Activated CD4-positive, alpha-beta memory T cell treated with anti-CD3 and anti-CD28 coated beads, Interleukin-2, amount 10 ng/mL, durations not matched to agents 7 days and 5 days (primary cell): ENCODE measurements at regions of chr1 and their contacts with region 1.

Region 1: GRCh38 chr1:225428068-225428880 is 436 bp upstream of the LBR start:
- DNase-seq: peak; percentile 95
- H3K4me3 Mint-ChIP-seq: peak overlapping the region; percentile 89
- H3K27ac Mint-ChIP-seq: peak overlapping the region; percentile 89
- H3K4me1 Mint-ChIP-seq: peaks cover 54% of the 10 kb centered on the region
- H3K27me3 Mint-ChIP-seq: peaks cover 2% of the 10 kb centered on the region

Region 2: GRCh38 chr1:225371366-225372010 is 56.8 kb before region 1 on chr1:
- CTCF ChIA-PET with region 1: no interaction called
- POLR2A ChIA-PET with region 1: no interaction called
- DNase-seq: no peak
- H3K4me3 Mint-ChIP-seq: no peak overlapping the region
- H3K27ac Mint-ChIP-seq: no peak overlapping the region
- H3K4me1 Mint-ChIP-seq: no peaks in the 10 kb centered on the region
- H3K27me3 Mint-ChIP-seq: peaks cover 9% of the 10 kb centered on the region

Region 3: GRCh38 chr1:225413708-225414375 is 14.4 kb before region 1 on chr1:
- CTCF ChIA-PET with region 1: interaction called, 4 read pairs
- POLR2A ChIA-PET with region 1: interaction called, 18 read pairs
- DNase-seq: no peak
- H3K4me3 Mint-ChIP-seq: no peak overlapping the region
- H3K27ac Mint-ChIP-seq: peak overlapping the region; percentile 19
- H3K4me1 Mint-ChIP-seq: peaks cover 17% of the 10 kb centered on the region
- H3K27me3 Mint-ChIP-seq: no peaks in the 10 kb centered on the region

Region 4: GRCh38 chr1:225454733-225455132 is 26.5 kb after region 1 on chr1:
- CTCF ChIA-PET with region 1: interaction called, 3 read pairs
- POLR2A ChIA-PET with region 1: interaction called, 70 read pairs
- DNase-seq: peak; percentile 62
- H3K4me3 Mint-ChIP-seq: no peak overlapping the region
- H3K27ac Mint-ChIP-seq: peak overlapping the region; percentile 77
- H3K4me1 Mint-ChIP-seq: peaks cover 50% of the 10 kb centered on the region
- H3K27me3 Mint-ChIP-seq: no peaks in the 10 kb centered on the region

Region 5: DNA sequence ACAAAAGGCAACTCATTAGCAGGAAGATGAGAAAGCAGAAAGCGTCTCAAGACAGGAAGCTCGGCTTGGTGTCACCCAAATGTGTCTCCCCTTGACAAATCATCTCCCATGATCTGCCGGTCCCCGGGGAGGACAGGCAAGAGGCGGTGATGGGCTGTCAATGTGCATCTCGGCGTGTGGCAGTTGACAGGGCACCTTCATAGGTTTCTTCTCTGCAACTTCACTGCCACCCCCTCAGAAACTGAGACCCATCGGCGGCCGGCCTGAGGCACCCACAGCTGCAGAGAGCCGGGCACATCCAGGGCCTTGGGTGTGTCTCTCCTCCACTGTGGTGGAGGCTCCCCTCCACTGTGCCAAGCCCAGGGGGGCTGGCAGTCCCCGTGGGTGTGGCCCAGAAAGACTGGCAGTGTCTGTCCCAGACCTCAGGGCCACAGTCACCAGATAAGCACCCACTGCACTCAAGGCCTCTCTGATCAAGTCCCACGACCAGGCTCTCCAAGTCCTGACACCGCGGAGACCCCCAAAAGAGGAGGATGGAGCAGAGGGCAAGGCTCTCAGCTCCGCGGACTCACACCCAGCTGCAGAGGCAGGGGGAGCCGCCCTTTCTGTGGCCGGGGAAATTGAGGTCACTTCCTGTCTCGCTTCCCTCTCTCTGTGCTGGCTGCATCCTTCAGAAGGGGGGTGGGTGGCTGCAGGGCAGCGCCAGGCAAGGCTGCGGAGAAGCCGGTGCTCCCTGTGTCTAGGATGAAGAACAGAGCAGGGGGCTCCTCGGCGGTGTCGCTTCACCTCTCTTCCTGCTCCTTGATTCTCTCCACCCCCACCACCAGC is 39.1 kb after region 1 on chr1:
- CTCF ChIA-PET with region 1: interaction called, 36 read pairs
- POLR2A ChIA-PET with region 1: interaction called, 290 read pairs
- DNase-seq: peak; percentile 91
- H3K4me3 Mint-ChIP-seq: peak overlapping the region; percentile 91
- H3K27ac Mint-ChIP-seq: peak overlapping the region; percentile 99
- H3K4me1 Mint-ChIP-seq: peaks cover 64% of the 10 kb centered on the region
- H3K27me3 Mint-ChIP-seq: no peaks in the 10 kb centered on the region

Region 6: GRCh38 chr1:225881969-225882693 is 453.9 kb after region 1 on chr1 and contains the start of gene TMEM63A:
- CTCF ChIA-PET with region 1: no interaction called
- POLR2A ChIA-PET with region 1: interaction called, 13 read pairs
- DNase-seq: peak; percentile 90
- H3K4me3 Mint-ChIP-seq: peak within 1 kb of the TSS; percentile 89
- H3K27ac Mint-ChIP-seq: peak within 1 kb of the TSS; percentile 88
- H3K4me1 Mint-ChIP-seq: peaks cover 50% of the 10 kb centered on the region
- H3K27me3 Mint-ChIP-seq: peaks cover 9% of the 10 kb centered on the region
- total RNA-seq, gene TMEM63A: 126 to 127 TPM

Region 7: DNA sequence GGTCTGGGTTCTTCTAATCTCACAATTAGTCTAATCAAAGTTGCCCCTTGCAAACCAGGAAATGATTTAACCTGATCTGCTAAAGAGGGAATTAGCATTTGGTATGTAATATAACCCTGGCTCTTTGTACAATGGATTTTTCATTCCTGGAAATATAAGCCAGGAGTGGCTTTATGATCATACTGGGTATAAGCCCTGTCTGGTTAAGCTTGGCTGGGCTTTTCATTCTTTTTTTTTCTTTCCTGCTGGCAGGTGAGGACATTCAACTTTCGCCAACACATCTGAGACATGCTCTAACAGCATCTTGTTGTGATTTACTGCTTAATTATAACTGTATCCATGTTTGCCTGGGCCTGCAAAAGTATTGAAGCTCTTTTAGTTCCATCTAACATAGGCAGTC is 591.3 kb after region 1 on chr1:
- CTCF ChIA-PET with region 1: no interaction called
- POLR2A ChIA-PET with region 1: no interaction called
- DNase-seq: no peak
- H3K4me3 Mint-ChIP-seq: no peak overlapping the region
- H3K27ac Mint-ChIP-seq: no peak overlapping the region
- H3K4me1 Mint-ChIP-seq: no peaks in the 10 kb centered on the region
- H3K27me3 Mint-ChIP-seq: peaks cover under 1% of the 10 kb centered on the region